Activated CD4-positive, alpha-beta memory T cell treated with anti-CD3 and anti-CD28 coated beads for 36 hours (primary cell): ENCODE measurements at regions of chr13 and their contacts with region 1.

Region 1: DNA sequence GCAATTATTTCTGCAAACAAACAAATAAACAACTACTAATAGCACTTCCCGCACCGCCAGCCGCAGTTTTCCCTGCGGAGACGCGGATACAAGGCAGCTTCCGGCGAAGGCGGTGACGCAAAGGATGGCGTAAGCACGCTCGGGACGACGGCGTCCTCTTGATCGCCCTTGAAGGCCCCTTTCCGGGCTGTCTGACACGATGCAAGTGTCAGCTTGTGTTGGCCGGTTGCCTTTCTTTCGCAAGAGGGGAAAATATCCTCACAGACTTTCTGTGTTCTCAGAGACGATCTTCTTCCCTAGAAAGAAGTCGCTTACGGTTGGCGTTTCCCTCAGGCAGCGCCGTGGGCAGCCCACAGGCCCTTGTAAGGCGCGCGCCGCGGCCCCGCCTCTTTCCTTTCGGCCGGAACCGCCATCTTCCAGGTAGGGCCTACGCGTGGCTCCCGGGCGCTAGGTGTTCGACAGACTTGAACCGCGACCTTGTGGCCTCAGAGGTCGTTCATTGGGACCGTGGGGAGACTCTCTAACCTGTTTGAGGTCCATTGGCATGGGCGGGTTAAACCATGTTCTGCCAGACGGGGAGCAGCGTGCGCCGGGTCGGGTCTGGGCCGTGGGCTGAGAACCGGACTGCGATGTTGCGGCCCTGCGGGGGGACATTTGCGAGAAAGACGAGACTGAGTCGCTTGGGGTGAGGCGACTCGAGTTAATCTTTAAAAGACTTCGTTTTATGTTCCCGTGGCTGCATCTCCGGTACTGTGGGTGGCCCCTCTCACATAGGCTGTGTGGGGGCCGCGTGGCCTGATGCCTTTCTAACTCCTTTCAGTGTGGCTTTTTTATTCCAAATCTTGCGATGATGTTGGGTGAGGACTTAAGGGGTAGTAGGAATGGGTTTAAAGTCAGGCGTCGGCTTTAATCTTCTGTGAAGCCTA is at the start of gene RPL21:
- DNase-seq: peak; percentile 92
- H3K4me3 Mint-ChIP-seq: peak within 1 kb of the TSS; percentile 94
- H3K27ac Mint-ChIP-seq: peak within 1 kb of the TSS; percentile 95
- H3K4me1 Mint-ChIP-seq: peaks cover 48% of the 10 kb centered on the region
- H3K27me3 Mint-ChIP-seq: no peaks in the 10 kb centered on the region
- total RNA-seq, gene RPL21: 1,539 to 1,545 TPM

Region 2: GRCh38 chr13:27147530-27148170 is 103.8 kb before region 1 on chr13:
- CTCF ChIA-PET with region 1: no interaction called
- POLR2A ChIA-PET with region 1: interaction called, 3 read pairs
- intact Hi-C with region 1: loop called (anchors 5 kb)
- DNase-seq: no peak
- H3K4me3 Mint-ChIP-seq: peak overlapping the region; percentile 45
- H3K27ac Mint-ChIP-seq: peak overlapping the region; percentile 91
- H3K4me1 Mint-ChIP-seq: peaks cover 76% of the 10 kb centered on the region
- H3K27me3 Mint-ChIP-seq: no peaks in the 10 kb centered on the region

Region 3: DNA sequence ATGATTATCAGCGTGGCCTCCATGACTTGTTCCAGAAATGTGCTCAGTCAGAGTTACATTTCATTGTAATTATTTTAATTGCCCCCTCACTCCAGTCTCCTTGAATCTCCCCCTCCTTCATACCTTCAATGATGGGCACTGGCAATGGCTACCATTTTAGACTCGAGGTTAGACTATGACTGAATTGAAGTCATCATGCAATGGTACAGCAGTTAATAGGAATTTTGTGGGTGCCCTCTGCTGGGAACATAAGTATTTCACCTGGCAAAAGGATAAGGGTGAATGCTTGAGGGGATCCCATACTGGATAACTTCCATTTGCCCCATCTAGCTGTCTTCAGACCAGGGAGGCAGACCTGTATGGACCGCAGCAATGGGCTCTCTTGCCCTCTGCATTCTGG is 47.6 kb before region 1 on chr13:
- CTCF ChIA-PET with region 1: no interaction called
- POLR2A ChIA-PET with region 1: interaction called, 5 read pairs
- intact Hi-C with region 1: loop called (anchors 2 kb)
- DNase-seq: no peak
- H3K4me3 Mint-ChIP-seq: no peak overlapping the region
- H3K27ac Mint-ChIP-seq: no peak overlapping the region
- H3K4me1 Mint-ChIP-seq: peaks cover 8% of the 10 kb centered on the region
- H3K27me3 Mint-ChIP-seq: no peaks in the 10 kb centered on the region

Region 4: DNA sequence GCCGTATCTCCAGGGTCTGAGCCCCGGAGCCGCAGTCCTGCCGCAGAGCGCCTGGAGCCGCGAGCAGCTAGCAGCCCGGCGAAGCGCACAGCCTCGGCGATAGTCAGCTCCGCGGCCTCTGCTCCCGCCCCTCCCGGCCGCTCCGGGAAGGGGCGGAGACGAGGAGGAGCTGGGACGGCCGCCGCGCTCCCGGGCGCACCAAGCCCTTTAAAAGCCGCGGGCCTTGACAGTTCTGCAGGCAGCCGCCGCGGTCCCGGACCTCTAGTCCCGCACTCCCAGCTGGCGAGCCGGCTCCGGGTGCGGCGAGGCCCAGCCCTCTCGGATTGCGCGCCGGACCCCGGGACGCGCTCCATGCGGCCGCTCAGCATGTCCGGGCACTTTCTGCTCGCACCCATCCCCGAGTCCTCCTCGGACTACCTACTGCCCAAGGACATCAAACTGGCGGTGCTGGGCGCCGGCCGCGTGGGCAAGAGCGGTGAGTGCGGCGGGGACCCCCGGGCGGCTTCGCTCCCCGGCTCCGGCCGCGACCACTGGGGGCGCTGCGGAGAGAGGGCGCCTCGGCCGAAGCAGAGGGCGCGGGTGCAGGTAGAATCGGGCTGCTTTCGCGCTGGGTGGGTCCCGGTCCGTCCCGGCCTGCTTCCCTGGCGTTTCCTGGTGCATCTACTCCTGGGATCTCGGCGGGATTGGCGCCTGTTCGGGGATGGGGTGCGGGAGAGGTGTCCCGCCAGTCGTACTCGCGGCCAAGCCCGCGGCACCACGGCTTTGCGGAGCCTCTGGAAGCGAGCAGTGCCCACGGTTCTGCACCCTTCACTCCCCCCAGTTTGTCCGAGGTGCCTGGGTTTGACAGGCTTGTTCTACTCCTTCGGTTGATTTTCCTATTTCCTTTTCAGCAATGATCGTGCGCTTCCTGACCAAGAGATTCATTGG is 19.4 kb after region 1 on chr13 and contains the start of gene RASL11A:
- CTCF ChIA-PET with region 1: interaction called, 4 read pairs
- POLR2A ChIA-PET with region 1: interaction called, 4 read pairs
- intact Hi-C with region 1: loop called (anchors 1 kb)
- DNase-seq: peak; percentile 73
- H3K4me3 Mint-ChIP-seq: peak within 1 kb of the TSS; percentile 82
- H3K27ac Mint-ChIP-seq: no peak within 1 kb of the TSS
- H3K4me1 Mint-ChIP-seq: peaks cover 11% of the 10 kb centered on the region
- H3K27me3 Mint-ChIP-seq: peaks cover 15% of the 10 kb centered on the region
- total RNA-seq, gene RASL11A: 4.8 to 6.8 TPM

Region 5: DNA sequence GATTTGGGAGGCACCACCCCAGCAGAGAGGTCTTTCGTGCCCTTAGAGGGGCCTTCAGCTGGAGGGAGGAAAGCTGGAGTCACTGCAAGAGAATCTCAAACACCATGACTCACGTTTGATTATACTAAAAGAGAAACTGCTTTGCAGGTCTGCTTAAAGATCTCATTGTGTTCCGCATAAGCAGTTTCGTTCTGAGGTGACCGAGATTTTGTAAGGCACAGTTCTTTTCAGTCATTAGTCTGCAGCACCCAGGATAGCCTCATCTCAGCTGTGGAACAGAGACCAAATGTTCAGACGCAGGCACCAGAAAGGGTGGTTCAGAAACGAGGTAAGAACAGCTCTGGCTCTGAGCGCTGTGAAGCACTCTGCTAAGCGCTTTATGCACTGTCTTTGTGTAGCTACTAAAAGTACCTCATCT is 101.7 kb after region 1 on chr13:
- CTCF ChIA-PET with region 1: interaction called, 3 read pairs
- POLR2A ChIA-PET with region 1: interaction called, 5 read pairs
- intact Hi-C with region 1: loop called (anchors 1 kb)
- DNase-seq: peak; percentile 79
- H3K4me3 Mint-ChIP-seq: peak overlapping the region; percentile 45
- H3K27ac Mint-ChIP-seq: peak overlapping the region; percentile 82
- H3K4me1 Mint-ChIP-seq: peaks cover 19% of the 10 kb centered on the region
- H3K27me3 Mint-ChIP-seq: peaks cover 12% of the 10 kb centered on the region

Region 6: GRCh38 chr13:27449936-27450828 is 198.8 kb after region 1 on chr13 and contains the start of gene MTIF3:
- CTCF ChIA-PET with region 1: no interaction called
- POLR2A ChIA-PET with region 1: interaction called, 4 read pairs
- intact Hi-C with region 1: loop called (anchors 1 kb)
- DNase-seq: peak; percentile 97
- H3K4me3 Mint-ChIP-seq: peak within 1 kb of the TSS; percentile 90
- H3K27ac Mint-ChIP-seq: peak within 1 kb of the TSS; percentile 95
- H3K4me1 Mint-ChIP-seq: peaks cover 57% of the 10 kb centered on the region
- H3K27me3 Mint-ChIP-seq: no peaks in the 10 kb centered on the region
- total RNA-seq, gene MTIF3: 35.7 to 37.3 TPM

Region 7: DNA sequence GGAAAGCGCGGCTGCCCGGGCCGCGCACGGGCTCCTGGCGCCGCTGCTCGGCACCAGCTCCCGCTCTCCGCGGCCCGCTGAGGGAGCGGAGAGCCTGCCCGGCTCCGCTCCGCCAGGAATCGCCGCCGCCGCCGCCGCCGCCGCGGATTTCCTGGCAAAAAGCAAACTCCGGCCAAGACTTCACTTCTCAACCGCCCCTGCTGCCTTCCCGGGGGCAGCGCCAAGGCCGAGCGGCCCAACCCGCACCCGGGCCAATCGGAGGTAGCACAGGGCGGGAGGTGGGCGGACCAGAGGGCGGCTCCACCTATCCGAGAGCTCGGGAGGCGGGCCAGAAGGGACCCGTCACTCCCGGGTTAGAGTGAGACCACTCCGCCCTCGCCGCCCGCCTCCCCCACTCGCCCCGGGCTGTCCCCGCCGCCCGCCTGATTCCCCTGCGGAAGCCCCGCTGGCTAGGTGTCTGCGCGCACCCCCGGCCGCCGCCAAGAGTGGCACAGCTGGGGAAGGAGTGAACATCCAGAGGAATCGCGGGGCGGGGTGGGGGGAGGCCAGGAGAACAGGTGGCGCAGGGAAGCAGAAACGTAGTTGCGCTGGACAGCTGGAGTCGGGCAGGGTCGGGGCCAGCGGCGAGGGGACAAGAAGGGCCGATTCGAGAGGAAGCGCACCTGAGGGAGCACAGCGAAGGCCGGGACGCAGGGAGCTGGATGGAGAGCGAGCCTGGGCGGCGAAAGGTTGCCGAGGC is 369.1 kb after region 1 on chr13 and contains the start of gene LNX2:
- CTCF ChIA-PET with region 1: no interaction called
- POLR2A ChIA-PET with region 1: interaction called, 3 read pairs
- intact Hi-C with region 1: loop called (anchors 1 kb)
- DNase-seq: peak; percentile 98
- H3K4me3 Mint-ChIP-seq: peak within 1 kb of the TSS; percentile 92
- H3K27ac Mint-ChIP-seq: peak within 1 kb of the TSS; percentile 88
- H3K4me1 Mint-ChIP-seq: peaks cover 54% of the 10 kb centered on the region
- H3K27me3 Mint-ChIP-seq: no peaks in the 10 kb centered on the region
- total RNA-seq, gene LNX2: 5.0 to 5.4 TPM